Activated CD4-positive, alpha-beta T cell treated with anti-CD3 and anti-CD28 coated beads for 36 hours (primary cell): ENCODE measurements at regions of chr18 and their contacts with region 1.

Region 1: GRCh38 chr18:2655178-2655953 is at the start of gene SMCHD1:
- DNase-seq: peak; percentile 97
- ATAC-seq: peak; percentile 78
- H3K4me3 Mint-ChIP-seq: peak within 1 kb of the TSS; percentile 95
- H3K27ac Mint-ChIP-seq: peak within 1 kb of the TSS; percentile 96
- H3K4me1 Mint-ChIP-seq: peaks cover 31% of the 10 kb centered on the region
- H3K27me3 Mint-ChIP-seq: no peaks in the 10 kb centered on the region
- total RNA-seq, gene SMCHD1: 89.5 to 121 TPM

Region 2: DNA sequence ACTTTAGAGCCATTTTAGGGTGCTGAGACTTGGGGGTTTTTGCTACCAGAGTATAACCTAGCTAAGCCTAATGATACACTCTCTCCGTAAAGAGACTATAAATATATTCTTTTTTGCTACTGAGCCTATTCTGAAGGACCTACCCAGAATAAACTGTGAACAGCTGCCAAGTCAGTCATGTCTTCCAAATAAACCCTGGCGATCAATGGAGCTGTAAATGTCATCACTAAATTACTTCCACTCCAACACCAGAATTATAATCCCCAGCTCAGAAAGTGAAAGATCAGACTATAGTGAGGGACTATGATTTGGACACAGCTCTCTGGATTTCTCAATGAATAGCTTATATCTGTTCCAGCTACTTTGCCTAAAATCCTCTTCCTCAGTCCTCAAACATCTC is 262.9 kb before region 1 on chr18:
- CTCF ChIA-PET with region 1: no interaction called
- POLR2A ChIA-PET with region 1: no interaction called
- intact Hi-C with region 1: no loop called
- DNase-seq: no peak
- ATAC-seq: no peak
- H3K4me3 Mint-ChIP-seq: no peak overlapping the region
- H3K27ac Mint-ChIP-seq: no peak overlapping the region
- H3K4me1 Mint-ChIP-seq: no peaks in the 10 kb centered on the region
- H3K27me3 Mint-ChIP-seq: peaks cover 12% of the 10 kb centered on the region

Region 3: DNA sequence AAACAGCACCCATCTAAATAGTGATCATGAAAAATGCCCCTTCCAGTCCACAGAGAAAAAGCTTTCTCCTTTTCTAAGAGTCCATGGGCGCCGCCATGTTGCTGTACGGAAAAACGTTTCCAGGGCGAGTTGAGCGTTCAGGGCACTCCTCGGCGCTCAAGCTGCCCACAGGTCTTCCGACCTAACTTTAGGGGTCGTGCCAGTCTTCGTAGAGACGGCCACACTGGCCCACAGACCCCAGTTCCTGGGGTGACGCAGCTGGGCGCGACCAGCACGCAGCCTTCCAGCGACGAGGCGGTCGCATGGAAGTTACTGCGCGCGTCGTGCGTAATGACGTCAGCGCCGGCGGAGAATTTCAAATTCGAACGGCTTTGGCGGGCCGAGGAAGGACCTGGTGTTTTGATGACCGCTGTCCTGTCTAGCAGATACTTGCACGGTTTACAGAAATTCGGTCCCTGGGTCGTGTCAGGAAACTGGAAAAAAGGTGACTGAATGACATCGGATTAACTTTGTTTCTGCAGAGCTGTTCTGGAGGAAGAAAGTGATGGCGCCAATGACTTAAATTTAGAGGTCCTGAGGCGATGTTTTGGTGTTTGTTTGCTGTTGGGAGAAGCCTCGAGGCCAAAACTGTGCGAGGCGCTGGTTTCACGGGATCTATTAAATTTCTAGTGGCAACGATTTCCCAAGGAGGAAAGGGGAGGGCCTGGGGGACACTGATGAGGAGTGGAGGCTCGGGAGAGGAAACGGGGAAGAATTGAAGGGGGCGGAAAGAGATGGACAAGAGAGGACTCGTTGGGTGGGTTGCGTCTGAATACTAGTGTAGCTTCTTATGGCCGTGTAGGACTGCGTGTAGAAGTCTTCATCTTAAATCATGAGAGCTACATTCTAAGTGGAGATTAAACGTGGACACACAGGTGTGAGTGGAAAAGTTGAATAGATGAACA is 83.9 kb before region 1 on chr18 and contains the starts of genes METTL4 and NDC80:
- CTCF ChIA-PET with region 1: interaction called, 5 read pairs
- POLR2A ChIA-PET with region 1: interaction called, 5 read pairs
- intact Hi-C with region 1: loop called (anchors 1 to 2 kb)
- DNase-seq: peak; percentile 91
- ATAC-seq: peak; percentile 84
- H3K4me3 Mint-ChIP-seq: peak within 1 kb of the TSS; percentile 98
- H3K27ac Mint-ChIP-seq: peak within 1 kb of the TSS; percentile 95
- H3K4me1 Mint-ChIP-seq: peaks cover 55% of the 10 kb centered on the region
- H3K27me3 Mint-ChIP-seq: no peaks in the 10 kb centered on the region
- total RNA-seq, gene METTL4: 12.8 to 22.0 TPM
- total RNA-seq, gene NDC80: 84.7 to 88.5 TPM

Region 4: DNA sequence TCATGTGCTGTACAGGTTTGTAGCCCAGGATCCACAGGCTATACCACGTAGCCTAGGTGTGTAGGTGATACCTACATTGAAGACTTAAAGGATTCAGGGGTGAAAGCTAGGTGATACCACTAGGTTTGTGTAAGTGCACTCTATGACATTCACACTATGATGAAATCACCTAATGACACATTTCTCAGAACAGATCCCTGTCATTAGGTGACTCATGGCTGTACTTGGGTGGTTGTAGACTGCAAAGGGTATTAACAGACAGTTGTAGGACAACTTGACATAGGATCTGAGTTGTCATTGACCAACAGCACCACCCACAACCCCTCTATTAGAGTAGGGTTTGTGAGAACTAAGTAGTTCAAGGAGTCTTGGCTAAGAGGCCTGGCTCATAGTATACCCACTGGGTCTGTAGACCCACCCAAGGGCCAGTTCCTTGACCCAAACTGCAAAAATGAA is 27.5 kb before region 1 on chr18:
- CTCF ChIA-PET with region 1: no interaction called
- POLR2A ChIA-PET with region 1: interaction called, 3 read pairs
- intact Hi-C with region 1: loop called (anchors 1 to 2 kb)
- DNase-seq: peak; percentile 51
- ATAC-seq: peak; percentile 98
- H3K4me3 Mint-ChIP-seq: no peak overlapping the region
- H3K27ac Mint-ChIP-seq: peak overlapping the region; percentile 63
- H3K4me1 Mint-ChIP-seq: peaks cover 33% of the 10 kb centered on the region
- H3K27me3 Mint-ChIP-seq: no peaks in the 10 kb centered on the region

Region 5: GRCh38 chr18:2704541-2704940 is 49.2 kb after region 1 on chr18:
- CTCF ChIA-PET with region 1: interaction called, 3 read pairs
- POLR2A ChIA-PET with region 1: no interaction called
- intact Hi-C with region 1: loop called in 1 of 2 experiments (anchors 5 kb)
- DNase-seq: no peak
- ATAC-seq: no peak
- H3K4me3 Mint-ChIP-seq: no peak overlapping the region
- H3K27ac Mint-ChIP-seq: peak overlapping the region; percentile 59
- H3K4me1 Mint-ChIP-seq: peaks cover 20% of the 10 kb centered on the region
- H3K27me3 Mint-ChIP-seq: no peaks in the 10 kb centered on the region

Region 6: DNA sequence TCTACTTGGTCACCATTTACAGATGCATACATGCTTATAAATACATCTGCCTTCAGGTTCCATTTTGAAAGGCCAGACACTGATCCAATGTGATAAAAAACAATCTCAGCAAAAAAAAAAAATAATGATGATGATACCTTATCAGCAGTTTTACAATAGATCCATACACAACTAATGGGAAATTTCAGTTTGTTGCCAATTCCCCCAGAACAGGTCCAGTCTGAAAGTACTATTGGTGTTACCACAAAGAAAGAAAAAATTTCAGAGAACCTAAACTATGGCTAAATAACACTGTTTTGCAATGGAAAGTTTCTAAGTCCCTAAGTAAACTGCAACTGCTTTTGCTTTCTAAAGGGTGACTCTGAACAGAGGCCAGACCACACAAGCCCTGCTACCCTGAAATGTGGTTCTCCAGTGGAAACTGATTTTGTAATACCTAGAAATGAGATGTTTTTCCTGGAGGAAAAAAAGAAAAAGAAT is 303.5 kb after region 1 on chr18:
- CTCF ChIA-PET with region 1: no interaction called
- POLR2A ChIA-PET with region 1: no interaction called
- intact Hi-C with region 1: loop called (anchors 1 to 5 kb)
- DNase-seq: peak; percentile 63
- ATAC-seq: no peak
- H3K4me3 Mint-ChIP-seq: peak overlapping the region; percentile 71
- H3K27ac Mint-ChIP-seq: peak overlapping the region; percentile 100
- H3K4me1 Mint-ChIP-seq: peaks cover 90% of the 10 kb centered on the region
- H3K27me3 Mint-ChIP-seq: no peaks in the 10 kb centered on the region

Region 7: DNA sequence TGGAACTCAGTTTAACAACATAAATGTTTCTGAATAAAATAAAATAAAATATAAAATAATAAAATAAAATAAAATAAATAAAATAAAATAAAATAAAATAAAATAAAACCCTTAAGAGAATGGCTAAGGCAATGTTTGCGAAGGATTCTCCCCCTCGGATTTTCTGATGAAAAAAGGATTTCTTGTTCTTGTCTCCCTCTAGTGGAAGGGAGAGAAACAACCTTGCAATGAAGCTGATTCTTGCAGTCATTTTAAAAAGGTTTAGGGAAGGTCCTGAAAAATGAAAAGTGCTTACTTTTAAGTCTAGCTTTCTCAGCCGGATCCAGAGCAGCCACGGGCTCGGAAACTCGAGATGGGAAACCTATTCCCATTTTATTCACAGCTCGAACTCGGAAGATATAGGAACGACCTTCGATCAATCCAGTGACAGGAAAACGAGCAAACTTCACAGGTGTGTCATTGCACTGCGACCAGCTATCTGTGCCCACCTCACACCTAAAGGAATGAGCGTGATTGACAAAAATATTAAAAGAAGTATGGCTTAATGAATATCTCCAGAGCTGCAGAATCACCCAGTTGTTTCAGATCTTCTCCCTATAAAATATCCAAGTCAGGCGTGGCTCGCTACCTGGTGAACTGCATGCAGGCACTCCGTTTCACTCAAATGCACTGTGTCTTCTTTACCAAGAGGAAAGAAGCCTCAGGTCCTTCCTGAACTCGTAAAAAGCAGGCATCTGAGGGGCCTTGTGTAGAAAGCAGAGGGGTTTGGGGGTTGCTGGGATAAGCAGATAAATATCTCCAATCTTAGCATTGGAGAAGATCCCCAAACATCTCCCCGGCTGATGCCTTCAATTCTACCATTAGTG is 496.3 kb after region 1 on chr18:
- CTCF ChIA-PET with region 1: no interaction called
- POLR2A ChIA-PET with region 1: no interaction called
- intact Hi-C with region 1: no loop called
- DNase-seq: no peak
- ATAC-seq: no peak
- H3K4me3 Mint-ChIP-seq: no peak overlapping the region
- H3K27ac Mint-ChIP-seq: no peak overlapping the region
- H3K4me1 Mint-ChIP-seq: peaks cover 4% of the 10 kb centered on the region
- H3K27me3 Mint-ChIP-seq: no peaks in the 10 kb centered on the region

Region 8: GRCh38 chr18:3585656-3586509 is 930.5 kb after region 1 on chr18:
- CTCF ChIA-PET with region 1: no interaction called
- POLR2A ChIA-PET with region 1: no interaction called
- intact Hi-C with region 1: loop called in 1 of 2 experiments (anchors 2 kb)
- DNase-seq: peak; percentile 88
- ATAC-seq: peak; percentile 72
- H3K4me3 Mint-ChIP-seq: no peak overlapping the region
- H3K27ac Mint-ChIP-seq: peak overlapping the region; percentile 59
- H3K4me1 Mint-ChIP-seq: peaks cover 46% of the 10 kb centered on the region
- H3K27me3 Mint-ChIP-seq: no peaks in the 10 kb centered on the region